Colonic mucosa (tissue), 4 donors: ENCODE measurements at regions of chr13 and their contacts with region 1.

Region 1: DNA sequence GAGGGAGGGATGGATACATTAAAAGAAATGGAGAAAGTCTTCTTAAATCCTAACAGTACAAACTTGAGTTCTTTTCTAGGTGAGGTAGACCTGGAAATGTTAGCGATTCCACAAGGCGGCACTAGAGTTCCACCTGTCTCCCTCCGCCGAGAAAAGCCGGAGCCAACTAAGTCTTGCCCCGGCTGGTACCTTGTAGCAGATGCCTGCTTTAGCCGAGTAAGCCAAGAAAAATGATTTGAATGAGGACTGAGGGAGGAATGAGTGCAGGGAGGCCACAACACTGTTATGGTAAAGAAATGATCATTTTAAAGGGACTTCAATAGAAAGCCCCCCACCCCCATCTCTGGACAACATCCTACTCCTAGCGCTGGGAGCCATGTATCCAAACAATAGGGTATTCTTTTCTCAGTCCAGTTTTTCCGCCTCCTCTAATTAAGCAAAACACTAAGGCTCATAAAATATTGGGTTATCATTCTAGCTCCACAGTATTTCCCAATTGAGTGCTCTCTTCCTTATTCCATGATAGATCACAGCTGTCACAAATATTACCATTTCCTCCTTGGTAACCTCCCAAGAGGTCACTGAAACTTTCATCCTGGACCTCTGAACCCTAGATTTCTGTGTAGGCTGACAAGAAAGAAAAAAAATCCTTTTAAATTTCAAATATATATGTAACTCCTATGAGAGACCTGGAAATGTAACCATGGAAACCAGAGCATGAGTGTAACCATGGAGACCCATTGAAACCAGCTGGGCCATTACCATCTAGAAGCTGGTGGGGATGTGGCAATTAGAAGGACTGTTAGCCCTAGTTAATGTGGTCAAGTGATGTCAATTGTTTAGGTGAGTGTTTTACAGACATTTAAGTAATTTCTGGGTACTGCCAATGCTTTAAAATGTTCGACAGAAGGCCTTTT is 58.3 kb downstream of the GPALPP1 start:
- DNase-seq: peak; percentile 81
- H3K4me3 ChIP-seq: peak overlapping the region; percentile 46
- H3K27ac ChIP-seq: no peak overlapping the region
- H3K4me1 ChIP-seq: no peaks in the 10 kb centered on the region
- H3K27me3 ChIP-seq: no peaks in the 10 kb centered on the region
- CTCF ChIP-seq: peak; percentile 80

Region 2: DNA sequence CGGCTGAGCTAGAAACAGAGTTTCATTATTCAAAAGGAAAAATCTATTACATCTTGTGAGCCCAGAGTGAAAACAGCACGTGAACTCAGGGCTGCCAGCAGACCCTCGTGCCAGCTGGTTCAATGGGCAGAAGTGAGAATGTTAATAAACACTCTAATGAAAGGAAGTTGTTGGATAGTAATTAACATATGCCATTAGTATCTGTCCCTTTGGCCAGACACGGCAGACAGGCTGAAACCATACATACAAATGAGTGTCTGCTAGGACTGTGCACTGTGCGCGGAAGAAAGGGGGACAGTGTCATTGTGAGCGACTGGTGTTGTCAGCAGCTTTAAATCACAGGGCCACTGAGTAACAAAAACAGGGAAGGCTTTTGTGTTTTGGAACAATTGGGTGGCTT is 349.6 kb before region 1 on chr13:
- intact Hi-C with region 1: no loop called
- DNase-seq: no peak
- H3K4me3 ChIP-seq: no peak overlapping the region
- H3K27ac ChIP-seq: no peak overlapping the region
- H3K4me1 ChIP-seq: no peaks in the 10 kb centered on the region
- H3K27me3 ChIP-seq: no peaks in the 10 kb centered on the region
- CTCF ChIP-seq: no peak

Region 3: DNA sequence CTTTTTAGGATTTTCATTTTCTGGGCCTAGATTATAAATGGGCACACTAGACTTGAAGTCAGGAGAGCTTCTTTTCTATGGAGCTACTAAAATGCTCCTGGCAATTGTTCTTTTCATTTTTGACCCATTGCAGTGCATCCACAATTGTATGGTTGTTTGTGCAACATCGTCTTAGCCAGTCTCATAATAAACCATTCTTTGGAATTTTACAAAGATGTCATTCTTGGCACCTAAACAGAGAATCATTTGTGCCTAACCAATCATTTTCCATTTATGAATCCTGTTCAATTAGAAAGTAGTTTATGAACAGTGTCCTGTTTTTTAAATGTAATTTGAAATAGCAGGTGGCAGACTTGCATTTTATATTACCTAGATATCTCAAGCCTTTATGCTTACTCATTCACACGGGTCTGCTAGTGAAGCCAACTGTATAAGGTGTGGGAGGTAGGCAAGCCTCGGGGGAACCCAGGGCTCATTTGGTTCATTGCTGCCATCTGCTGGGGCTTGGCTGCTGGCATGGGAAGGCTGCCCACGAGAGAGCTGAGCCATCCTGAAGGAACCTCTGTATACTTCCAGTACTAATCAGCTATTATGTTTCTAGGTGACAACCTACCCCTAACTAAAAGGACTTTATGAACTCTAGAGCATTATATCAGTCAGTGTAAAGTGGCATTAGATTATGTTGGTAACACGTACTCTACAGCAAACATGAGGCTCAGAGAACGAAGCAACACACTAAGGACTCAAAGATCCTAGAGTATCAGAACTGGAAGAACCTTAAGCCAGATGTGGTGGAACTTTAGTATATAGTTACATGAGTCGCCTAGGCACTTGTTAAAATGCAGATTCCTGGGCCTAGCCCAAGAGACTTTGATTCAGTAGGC is 233.3 kb after region 1 on chr13:
- intact Hi-C with region 1: loop called (anchors 2 kb)
- DNase-seq: peak; percentile 76
- H3K4me3 ChIP-seq: no peak overlapping the region
- H3K27ac ChIP-seq: no peak overlapping the region
- H3K4me1 ChIP-seq: no peaks in the 10 kb centered on the region
- H3K27me3 ChIP-seq: no peaks in the 10 kb centered on the region
- CTCF ChIP-seq: peak; percentile 69

Region 4: DNA sequence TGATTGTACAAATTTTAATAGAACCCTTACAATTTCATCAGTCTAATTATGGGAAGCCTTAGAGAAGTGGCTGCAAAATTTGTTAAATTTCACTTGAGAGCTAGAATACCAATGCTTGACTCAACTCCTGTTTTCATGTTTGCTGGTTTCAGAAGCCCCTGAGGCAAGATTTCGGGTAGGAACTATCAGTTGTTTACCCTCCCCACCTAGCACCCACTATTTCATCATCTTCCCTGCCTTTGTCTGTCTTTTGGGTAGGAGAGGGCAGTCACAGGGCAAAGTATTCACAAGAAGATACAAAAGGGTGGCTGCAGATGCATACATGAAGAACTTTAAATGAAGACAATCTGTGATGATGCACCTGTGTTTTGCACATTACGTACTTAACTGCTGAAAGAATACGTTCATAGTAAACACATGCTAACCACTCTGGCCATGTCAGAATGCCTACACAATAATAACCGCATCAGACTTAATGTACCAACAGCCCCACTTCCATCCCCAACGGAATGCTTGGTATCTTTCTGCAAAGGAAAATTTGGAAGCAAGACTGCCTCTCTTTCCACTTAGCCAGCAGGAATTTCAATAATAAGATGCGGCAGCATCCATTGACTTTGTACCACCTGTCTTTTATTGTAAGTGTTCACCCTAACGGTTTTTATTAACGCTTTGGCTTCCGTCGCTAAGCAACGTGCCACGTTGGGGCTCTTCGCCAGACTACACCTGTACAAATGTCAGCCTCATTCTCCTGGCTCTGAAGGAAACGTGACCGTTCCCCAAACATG is 262.9 kb after region 1 on chr13:
- intact Hi-C with region 1: loop called (anchors 2 kb)
- DNase-seq: no peak
- H3K4me3 ChIP-seq: peak overlapping the region; percentile 45
- H3K27ac ChIP-seq: no peak overlapping the region
- H3K4me1 ChIP-seq: peaks cover 4% of the 10 kb centered on the region
- H3K27me3 ChIP-seq: no peaks in the 10 kb centered on the region
- CTCF ChIP-seq: no peak

Region 5: DNA sequence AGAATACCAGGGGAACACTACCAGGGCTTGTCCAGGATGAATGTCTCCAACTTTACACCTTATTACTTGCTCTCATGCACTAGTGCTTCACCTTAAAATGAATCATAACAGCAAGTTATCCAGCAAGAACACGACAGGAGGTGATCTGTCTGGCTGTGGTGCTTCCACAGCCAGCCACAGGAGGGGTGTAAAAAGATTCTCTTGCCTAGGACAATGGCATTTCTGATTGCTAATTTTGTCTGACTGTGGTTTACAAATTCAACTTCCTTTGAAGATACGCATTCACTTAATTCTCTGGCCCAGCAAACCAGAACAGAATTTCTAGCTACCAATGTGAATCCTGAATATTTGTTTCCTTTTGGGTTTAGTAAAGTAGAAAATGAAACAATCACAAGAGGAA is 394.0 kb after region 1 on chr13:
- intact Hi-C with region 1: no loop called
- DNase-seq: no peak
- H3K4me3 ChIP-seq: no peak overlapping the region
- H3K27ac ChIP-seq: no peak overlapping the region
- H3K4me1 ChIP-seq: no peaks in the 10 kb centered on the region
- H3K27me3 ChIP-seq: no peaks in the 10 kb centered on the region
- CTCF ChIP-seq: no peak